Left cardiac atrium (tissue), 4 donors: ENCODE measurements at regions of chr3 and their contacts with region 1.

Region 1: GRCh38 chr3:12135029-12135657 is 23.6 kb downstream of the TIMP4 start:
- DNase-seq: peak; percentile 82
- ATAC-seq: peak; percentile 86 to 87

Region 2: GRCh38 chr3:12175844-12176453 is 40.8 kb after region 1 on chr3:
- intact Hi-C with region 1: loop called (anchors 1 to 2 kb)
- DNase-seq: peak; percentile 69
- ATAC-seq: peak; percentile 80 to 88

Region 3: GRCh38 chr3:12484198-12484974 is 349.2 kb after region 1 on chr3 and contains the start of gene TSEN2:
- intact Hi-C with region 1: loop called (anchors 2 to 5 kb)
- DNase-seq: peak; percentile 95
- ATAC-seq: peak; percentile 97
- total RNA-seq, gene TSEN2: 15.3 to 16.8 TPM

Region 4: GRCh38 chr3:12719984-12720898 is 585.1 kb after region 1 on chr3:
- intact Hi-C with region 1: loop called in 1 of 2 experiments (anchors 10 kb)
- DNase-seq: peak; percentile 76
- ATAC-seq: peak; percentile 97